Activated CD4-positive, alpha-beta T cell treated with anti-CD3 and anti-CD28 coated beads, Interleukin-2, amount 10 ng/mL, durations not matched to agents 24 days and 14 days (primary cell): ENCODE measurements at regions of chr1 and their contacts with region 1.

Region 1: GRCh38 chr1:8540261-8540941 is 222.5 kb downstream of the SLC45A1 start:
- DNase-seq: no peak
- H3K4me3 Mint-ChIP-seq: peak overlapping the region; percentile 67
- H3K27ac Mint-ChIP-seq: peak overlapping the region; percentile 92
- H3K4me1 Mint-ChIP-seq: peaks cover 41% of the 10 kb centered on the region
- H3K27me3 Mint-ChIP-seq: no peaks in the 10 kb centered on the region

Region 2: GRCh38 chr1:8510041-8510823 is 30.2 kb before region 1 on chr1:
- intact Hi-C with region 1: loop called (anchors 1 kb)
- DNase-seq: peak; percentile 85
- H3K4me3 Mint-ChIP-seq: peak overlapping the region; percentile 56
- H3K27ac Mint-ChIP-seq: peak overlapping the region; percentile 89
- H3K4me1 Mint-ChIP-seq: peaks cover 37% of the 10 kb centered on the region
- H3K27me3 Mint-ChIP-seq: no peaks in the 10 kb centered on the region

Region 3: GRCh38 chr1:8554956-8555534 is 14.6 kb after region 1 on chr1:
- intact Hi-C with region 1: loop called (anchors 1 kb)
- DNase-seq: no peak
- H3K4me3 Mint-ChIP-seq: no peak overlapping the region
- H3K27ac Mint-ChIP-seq: peak overlapping the region; percentile 83
- H3K4me1 Mint-ChIP-seq: peaks cover 41% of the 10 kb centered on the region
- H3K27me3 Mint-ChIP-seq: no peaks in the 10 kb centered on the region